ENCODE measurements at regions of chrX and their contacts with region 1.

Region 1: DNA sequence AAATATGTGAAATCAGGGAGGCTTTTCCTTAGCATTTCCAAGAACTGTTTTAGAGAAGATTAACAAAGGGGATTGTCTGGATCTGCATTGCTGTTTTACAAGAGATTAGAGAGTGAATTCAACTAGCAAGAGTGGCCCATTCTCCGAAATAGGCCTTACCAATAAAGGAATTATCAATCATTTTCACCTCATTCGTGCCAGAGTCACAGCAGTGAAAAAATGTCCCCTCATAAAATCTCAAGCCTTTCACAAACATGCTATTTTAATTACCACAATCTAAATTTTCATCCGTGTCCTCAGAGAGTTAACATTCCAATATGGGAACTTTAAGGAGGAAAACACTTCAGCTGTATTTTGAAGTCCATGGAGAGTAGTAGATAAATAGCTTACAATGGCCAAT is 979.6 kb downstream of the RPA4 start:
- DNase-seq: no peak
- H3K4me3 ChIP-seq: no peak overlapping the region
- H3K27ac ChIP-seq: no peak overlapping the region
- H3K4me1 ChIP-seq: no peaks in the 10 kb centered on the region
- H3K27me3 ChIP-seq: no peaks in the 10 kb centered on the region
- CTCF ChIP-seq: no peak
- POLR2A ChIP-seq: no peak

Region 2: DNA sequence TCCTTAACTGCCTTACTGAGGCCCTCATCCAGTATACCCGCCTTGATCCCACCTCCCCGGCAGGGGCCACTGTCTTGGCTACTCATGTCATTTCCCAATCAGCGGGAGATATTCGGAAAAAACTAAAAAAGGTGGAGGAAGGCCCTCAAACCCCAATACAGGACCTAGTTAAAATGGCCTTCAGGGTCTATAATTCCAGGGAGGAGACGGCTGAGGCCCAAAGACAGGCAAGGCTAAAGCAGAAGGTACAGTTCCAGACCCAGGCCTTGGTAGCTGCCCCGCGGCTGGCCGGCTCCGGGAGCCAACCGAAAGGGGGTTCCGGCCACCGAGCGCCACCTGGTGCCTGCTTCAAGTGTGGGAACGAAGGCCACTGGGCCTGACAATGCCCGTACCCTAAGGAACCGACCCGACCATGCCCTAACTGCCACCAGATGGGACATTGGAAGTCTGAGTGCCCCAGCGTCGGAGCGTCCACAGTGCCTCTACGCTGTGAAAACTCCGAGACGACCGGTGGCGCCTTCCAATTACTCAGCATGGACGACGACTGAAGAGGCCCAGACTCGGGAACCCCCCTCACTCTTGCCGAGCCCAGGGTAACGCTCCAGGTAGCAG is 20.0 kb before region 1 on chrX:
- intact Hi-C with region 1: loop called (anchors 1 kb)
- DNase-seq: no peak
- H3K4me3 ChIP-seq: no peak overlapping the region
- H3K27ac ChIP-seq: no peak overlapping the region
- H3K4me1 ChIP-seq: no peaks in the 10 kb centered on the region
- H3K27me3 ChIP-seq: no peaks in the 10 kb centered on the region
- CTCF ChIP-seq: no peak
- POLR2A ChIP-seq: no peak

Measured in vagina (tissue), 2 donors.